ENCODE measurements at regions of chr7 and their contacts with region 1.

Region 1: DNA sequence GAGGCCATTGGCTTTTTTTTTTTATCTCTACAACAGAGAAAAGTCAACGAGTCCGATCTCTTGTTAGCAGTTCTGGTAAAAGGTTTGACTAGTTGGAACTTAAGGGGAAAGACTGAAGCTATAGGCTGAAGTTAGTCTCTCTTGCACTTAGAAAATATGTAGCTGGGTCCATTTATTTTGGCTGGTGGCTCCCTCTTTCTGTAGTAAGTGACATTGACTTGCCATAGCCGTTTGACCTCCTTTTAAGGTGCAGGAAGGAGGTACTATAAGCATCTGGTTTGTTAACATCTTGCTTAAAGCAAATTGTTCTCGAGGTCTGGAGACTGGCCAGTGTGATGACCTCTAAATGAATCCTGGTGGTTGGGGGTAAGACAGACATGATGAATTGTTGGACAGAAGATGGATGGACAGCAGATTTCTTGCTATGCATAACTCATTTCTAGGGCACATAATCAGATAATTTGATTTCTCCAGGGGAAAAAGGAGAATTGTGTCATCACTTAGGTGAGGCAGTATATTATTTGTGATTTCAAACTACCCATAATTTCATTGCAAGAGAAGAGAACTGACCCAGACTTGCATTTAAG is 356.3 kb upstream of the GALNT17 start:
- DNase-seq: peak; percentile 40
- ATAC-seq: peak; percentile 79
- H3K4me3 ChIP-seq: no peak overlapping the region
- H3K27ac ChIP-seq: peak overlapping the region; percentile 21
- H3K4me1 ChIP-seq: peaks cover 14% of the 10 kb centered on the region
- H3K27me3 ChIP-seq: no peaks in the 10 kb centered on the region
- CTCF ChIP-seq: peak; percentile 48 to 66 (median 57); a peak in 5 of 6 replicates
- EP300 ChIP-seq: no peak
- POLR2A ChIP-seq: no peak
- RAD21 ChIP-seq: peak; percentile 71

Region 2: GRCh38 chr7:70710011-70710480 is 65.6 kb before region 1 on chr7:
- CTCF ChIA-PET with region 1: interaction called, 18 read pairs
- POLR2A ChIA-PET with region 1: no interaction called
- RAD21 ChIA-PET with region 1: interaction called, 125 read pairs
- SMC1A ChIA-PET with region 1: interaction called, 177 read pairs
- in situ Hi-C with region 1: no loop called
- intact Hi-C with region 1: no loop called
- DNase-seq: peak; percentile 73
- ATAC-seq: peak; percentile 91
- H3K4me3 ChIP-seq: no peak overlapping the region
- H3K27ac ChIP-seq: peak overlapping the region; percentile 53; the same call in 1 of the 2 replicates
- H3K4me1 ChIP-seq: peaks cover 16% of the 10 kb centered on the region
- H3K27me3 ChIP-seq: no peaks in the 10 kb centered on the region
- CTCF ChIP-seq: no peak
- EP300 ChIP-seq: peak in 1 of 2 experiments; percentile 64; a peak in 1 of 4 replicates
- POLR2A ChIP-seq: no peak
- RAD21 ChIP-seq: no peak

Region 3: GRCh38 chr7:70728872-70729552 is 46.7 kb before region 1 on chr7:
- CTCF ChIA-PET with region 1: interaction called, 131 read pairs
- POLR2A ChIA-PET with region 1: interaction called, 4 read pairs
- RAD21 ChIA-PET with region 1: interaction called, 125 read pairs
- SMC1A ChIA-PET with region 1: interaction called, 148 read pairs
- in situ Hi-C with region 1: no loop called
- intact Hi-C with region 1: loop called (anchors 1 kb)
- DNase-seq: no peak
- ATAC-seq: peak; percentile 34
- H3K4me3 ChIP-seq: peak overlapping the region; percentile 13; the same call in 1 of the 2 replicates
- H3K27ac ChIP-seq: peak overlapping the region; percentile 89
- H3K4me1 ChIP-seq: peaks cover 37% of the 10 kb centered on the region
- H3K27me3 ChIP-seq: no peaks in the 10 kb centered on the region
- CTCF ChIP-seq: no peak
- EP300 ChIP-seq: no peak
- POLR2A ChIP-seq: peak; percentile 49
- RAD21 ChIP-seq: no peak

Region 4: DNA sequence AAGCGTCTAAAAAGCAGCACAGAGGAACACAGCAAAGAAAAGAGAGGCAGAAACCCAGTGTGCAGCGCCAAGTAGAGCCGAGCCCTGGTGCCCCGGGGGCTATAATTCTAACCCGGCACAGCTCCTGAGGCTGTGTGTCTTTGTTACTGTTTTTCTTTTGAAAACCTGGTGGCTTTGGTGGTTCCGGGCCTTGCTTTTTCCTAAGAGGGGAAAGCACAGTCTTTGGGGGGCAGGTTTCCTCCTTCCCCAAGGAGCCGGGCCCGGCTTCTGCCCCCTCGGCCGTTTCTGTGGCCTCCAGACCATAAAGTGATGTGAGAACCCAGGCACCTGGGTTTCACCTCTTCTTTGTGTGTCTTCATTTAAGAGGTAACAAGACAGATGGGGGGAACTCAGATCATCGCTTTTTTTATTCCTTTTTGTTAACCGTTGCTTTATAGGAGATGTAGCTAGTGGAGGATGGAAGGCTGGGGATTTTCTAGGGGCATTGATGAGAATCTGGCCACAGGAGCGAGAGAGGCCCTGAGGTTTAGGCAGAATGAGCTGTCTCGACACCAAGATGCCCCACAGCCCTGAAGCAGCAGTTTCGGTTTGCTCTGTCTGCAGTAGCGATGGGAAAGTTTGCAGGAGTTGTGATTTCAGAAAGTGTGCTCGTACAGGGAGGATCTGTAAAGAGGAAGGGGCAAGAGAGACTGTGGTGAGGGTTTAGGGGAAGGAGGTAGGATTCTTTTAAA is 11.5 kb before region 1 on chr7:
- CTCF ChIA-PET with region 1: interaction called, 22 read pairs
- POLR2A ChIA-PET with region 1: interaction called, 8 read pairs
- RAD21 ChIA-PET with region 1: interaction called, 53 read pairs
- SMC1A ChIA-PET with region 1: interaction called, 114 read pairs
- in situ Hi-C with region 1: no loop called
- intact Hi-C with region 1: no loop called
- DNase-seq: peak; percentile 98
- ATAC-seq: peak; percentile 88
- H3K4me3 ChIP-seq: peak overlapping the region; percentile 54
- H3K27ac ChIP-seq: peak overlapping the region; percentile 98
- H3K4me1 ChIP-seq: peaks cover 43% of the 10 kb centered on the region
- H3K27me3 ChIP-seq: no peaks in the 10 kb centered on the region
- CTCF ChIP-seq: no peak
- EP300 ChIP-seq: peak in 1 of 2 experiments; percentile 72
- POLR2A ChIP-seq: peak; percentile 27; the same call in 1 of the 2 replicates
- RAD21 ChIP-seq: 0 out of 2 replicates have a peak, but pooled peaks have one; percentile 16

Region 5: GRCh38 chr7:70795948-70796347 is 20.3 kb after region 1 on chr7:
- CTCF ChIA-PET with region 1: interaction called, 5 read pairs
- POLR2A ChIA-PET with region 1: interaction called, 10 read pairs
- RAD21 ChIA-PET with region 1: no interaction called
- SMC1A ChIA-PET with region 1: interaction called, 3 read pairs
- in situ Hi-C with region 1: no loop called
- intact Hi-C with region 1: no loop called
- DNase-seq: no peak
- ATAC-seq: no peak
- H3K4me3 ChIP-seq: no peak overlapping the region
- H3K27ac ChIP-seq: no peak overlapping the region
- H3K4me1 ChIP-seq: no peaks in the 10 kb centered on the region
- H3K27me3 ChIP-seq: no peaks in the 10 kb centered on the region
- CTCF ChIP-seq: no peak
- EP300 ChIP-seq: no peak
- POLR2A ChIP-seq: no peak
- RAD21 ChIP-seq: no peak

Measured in GM12878 (cell line).